PC-9 (cell line): ENCODE measurements at regions of chr11 and their contacts with region 1.

Region 1: DNA sequence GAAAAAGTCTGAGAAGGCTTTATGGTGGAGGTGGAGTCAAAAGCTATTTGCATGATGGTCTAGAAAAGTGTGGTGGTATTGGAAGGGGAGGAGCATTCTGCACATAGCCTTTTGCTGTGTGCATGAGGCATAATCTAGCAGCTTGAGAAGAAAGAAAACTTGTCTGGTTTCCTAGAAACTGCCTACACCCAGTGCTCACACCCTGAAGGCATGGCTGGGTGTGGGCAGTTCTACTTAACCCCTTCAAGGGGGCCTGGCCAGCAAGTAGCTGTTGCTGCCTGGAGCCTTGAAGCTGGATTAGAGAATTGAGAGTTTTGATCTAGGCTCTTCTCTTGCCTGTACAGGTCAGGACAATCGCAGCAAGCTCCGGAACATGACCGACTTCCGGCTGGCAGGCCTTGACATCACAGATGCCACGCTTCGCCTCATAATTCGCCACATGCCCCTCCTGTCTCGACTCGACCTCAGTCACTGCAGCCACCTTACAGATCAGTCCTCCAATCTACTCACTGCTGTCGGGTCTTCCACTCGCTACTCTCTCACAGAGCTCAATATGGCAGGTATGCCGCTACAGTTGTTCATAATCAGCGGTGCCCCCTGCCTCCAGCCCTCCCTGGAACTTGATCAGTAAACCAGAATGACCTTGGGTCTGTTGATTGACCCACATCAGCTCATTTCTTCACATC is 12.3 kb upstream of the GRK2 start:
- DNase-seq: peak in 1 of 2 experiments; percentile 55
- H3K4me3 ChIP-seq: no peak overlapping the region
- H3K27ac ChIP-seq: no peak overlapping the region
- H3K4me1 ChIP-seq: peaks cover 31% of the 10 kb centered on the region
- H3K27me3 ChIP-seq: no peaks in the 10 kb centered on the region
- CTCF ChIP-seq: no peak

Region 2: DNA sequence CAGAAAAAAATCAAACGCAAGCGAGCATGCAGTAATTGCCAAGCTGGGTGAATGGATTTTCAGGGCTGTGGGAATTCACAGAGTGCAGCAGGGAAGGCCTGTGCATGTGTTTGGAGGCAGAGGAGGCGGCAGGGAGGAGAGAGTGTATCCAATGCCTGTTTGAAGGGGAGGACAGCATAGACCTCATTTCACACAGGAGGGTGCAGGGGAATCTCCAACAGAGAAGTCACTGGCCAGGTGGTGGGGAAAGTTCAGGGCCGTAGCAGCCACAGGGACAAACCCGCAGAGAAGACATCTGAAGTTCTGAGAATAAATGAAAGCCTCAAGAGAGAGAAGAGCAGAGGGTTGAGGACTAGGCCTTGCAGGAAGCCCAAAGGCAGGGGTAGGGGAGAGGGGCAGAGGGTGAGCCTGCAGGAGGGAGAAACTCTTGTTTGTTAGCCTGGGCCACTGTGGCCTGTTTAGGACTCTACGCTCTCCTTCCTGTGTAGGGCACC is 154.1 kb before region 1 on chr11:
- CTCF ChIA-PET with region 1: interaction called, 23 read pairs
- POLR2A ChIA-PET with region 1: no interaction called
- intact Hi-C with region 1: no loop called
- DNase-seq: no peak
- H3K4me3 ChIP-seq: no peak overlapping the region
- H3K27ac ChIP-seq: no peak overlapping the region
- H3K4me1 ChIP-seq: no peaks in the 10 kb centered on the region
- H3K27me3 ChIP-seq: no peaks in the 10 kb centered on the region
- CTCF ChIP-seq: no peak

Region 3: GRCh38 chr11:67436459-67437081 is 182.6 kb after region 1 on chr11:
- CTCF ChIA-PET with region 1: no interaction called
- POLR2A ChIA-PET with region 1: no interaction called
- intact Hi-C with region 1: no loop called
- DNase-seq: no peak
- H3K4me3 ChIP-seq: no peak overlapping the region
- H3K27ac ChIP-seq: no peak overlapping the region
- H3K4me1 ChIP-seq: 0 out of 2 replicates have a peak, but pooled peaks cover 8% of the 10 kb centered on the region
- H3K27me3 ChIP-seq: no peaks in the 10 kb centered on the region
- CTCF ChIP-seq: no peak

Region 4: DNA sequence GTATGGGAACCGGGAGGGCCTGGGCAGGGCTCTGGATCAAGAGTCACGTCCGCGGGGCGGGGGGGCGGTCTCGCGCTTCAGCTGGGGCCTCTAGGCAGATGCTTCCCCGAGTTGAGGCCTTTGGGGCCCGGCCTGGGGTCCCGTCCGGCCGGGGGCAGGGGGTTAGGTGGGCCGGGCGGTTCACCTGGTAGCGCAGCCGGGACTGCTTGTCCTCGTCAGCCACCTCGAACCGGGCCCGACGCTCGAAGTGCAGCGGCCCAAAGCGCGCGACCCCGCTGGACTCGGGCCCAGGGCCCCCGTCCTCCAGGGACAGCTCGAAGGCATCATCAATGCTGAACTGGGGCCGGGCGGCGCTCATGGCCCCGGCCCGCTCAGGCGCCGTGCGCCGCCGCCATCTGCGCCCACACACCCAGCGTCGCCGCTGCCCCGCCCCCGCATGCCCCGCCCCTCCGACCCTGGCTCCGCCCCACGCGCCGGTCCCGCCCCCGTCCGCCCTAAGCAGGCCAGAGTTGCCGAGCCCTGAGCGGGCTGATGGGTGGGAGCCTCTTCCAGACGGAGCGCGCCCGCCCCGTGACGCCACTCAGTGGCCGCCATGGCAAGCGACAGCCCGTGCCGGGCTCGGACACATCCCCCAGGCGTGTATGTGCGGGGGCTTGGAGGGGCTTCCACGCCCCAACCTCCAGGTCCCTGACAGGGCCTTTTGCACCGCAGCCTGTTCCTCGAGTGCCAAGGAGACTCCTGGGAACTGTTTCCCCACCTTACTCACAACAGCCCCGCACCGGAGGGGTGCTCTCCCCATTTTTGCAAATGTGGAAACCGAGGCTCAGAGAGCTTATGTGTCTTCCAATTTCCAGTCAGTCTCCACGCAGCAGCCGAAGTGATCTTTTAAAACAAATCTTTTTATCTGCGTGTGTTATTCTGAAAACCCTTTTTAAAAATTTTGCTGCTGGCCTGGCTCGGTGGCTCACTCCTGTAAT is 215.1 kb after region 1 on chr11 and contains the start of gene TMEM134:
- CTCF ChIA-PET with region 1: no interaction called
- POLR2A ChIA-PET with region 1: no interaction called
- intact Hi-C with region 1: no loop called
- DNase-seq: peak; percentile 80 to 91
- H3K4me3 ChIP-seq: peak within 1 kb of the TSS; percentile 92
- H3K27ac ChIP-seq: peak within 1 kb of the TSS; percentile 48
- H3K4me1 ChIP-seq: peaks cover 32% of the 10 kb centered on the region
- H3K27me3 ChIP-seq: no peaks in the 10 kb centered on the region
- CTCF ChIP-seq: peak; percentile 48
- total RNA-seq, gene TMEM134: 85.7 and 125 TPM in 2 replicates

Region 5: DNA sequence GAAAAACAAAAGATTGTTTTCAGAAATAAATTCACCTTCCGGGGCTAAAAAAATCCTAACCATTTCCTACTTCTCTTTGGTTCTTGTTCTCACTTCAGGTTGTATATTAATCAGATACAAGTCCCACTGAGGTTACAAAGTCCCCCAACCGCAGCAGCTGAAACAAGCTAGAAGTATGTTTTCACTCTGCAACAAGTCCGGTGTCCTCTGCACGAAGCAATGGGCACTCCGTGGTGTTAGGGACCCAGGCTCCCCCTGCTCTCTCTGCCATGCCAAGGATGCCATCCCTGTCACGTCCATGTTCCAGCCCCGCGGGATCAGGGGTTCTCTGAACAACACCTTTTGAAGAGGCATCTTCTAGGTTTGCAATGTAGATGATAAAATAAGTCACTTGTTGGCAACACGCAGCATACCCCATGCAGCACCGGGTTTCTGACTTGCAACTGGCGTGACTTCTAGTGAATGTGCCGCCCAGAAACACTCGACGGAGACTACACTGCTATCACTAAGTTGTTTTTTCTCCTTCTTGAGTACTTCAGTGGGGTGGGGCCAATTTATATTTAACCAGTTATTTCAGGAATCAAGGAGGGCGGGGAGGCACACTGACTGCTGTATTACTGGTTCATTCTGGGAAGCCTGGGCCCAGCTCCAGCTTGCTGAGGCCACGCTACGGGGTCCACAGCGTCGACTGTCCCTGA is 304.2 kb after region 1 on chr11:
- CTCF ChIA-PET with region 1: no interaction called
- POLR2A ChIA-PET with region 1: interaction called, 16 read pairs
- intact Hi-C with region 1: no loop called
- DNase-seq: no peak
- H3K4me3 ChIP-seq: no peak overlapping the region
- H3K27ac ChIP-seq: no peak overlapping the region
- H3K4me1 ChIP-seq: peaks cover 14% of the 10 kb centered on the region
- H3K27me3 ChIP-seq: no peaks in the 10 kb centered on the region
- CTCF ChIP-seq: no peak